ENCODE measurements at regions of chr12 and their contacts with region 1.

Region 1: DNA sequence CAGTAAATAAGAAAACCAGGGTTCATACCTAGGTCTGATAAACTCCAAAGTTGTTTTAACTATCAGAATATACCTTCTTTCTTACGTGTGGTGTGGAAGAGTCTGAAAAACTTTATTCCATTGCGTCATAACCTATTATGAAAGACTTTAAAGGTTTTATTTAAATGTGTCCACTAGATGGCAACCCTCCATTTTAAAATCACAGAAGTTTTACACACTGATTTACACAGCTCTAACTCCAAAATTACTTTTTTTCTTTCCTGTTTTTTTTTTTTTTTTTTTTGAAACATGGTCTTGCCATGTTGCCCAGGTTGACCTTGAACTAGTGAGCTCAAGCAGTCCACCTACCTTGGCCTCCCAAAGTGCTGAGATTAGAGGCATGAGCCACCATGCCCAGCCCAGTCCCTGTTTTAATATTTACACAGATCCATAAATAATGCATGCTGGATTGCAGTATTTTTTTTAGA is 17.3 kb upstream of the TMPRSS12 start:
- DNase-seq: peak in 1 of 2 donors; percentile 14
- H3K4me3 ChIP-seq: no peak overlapping the region
- H3K27ac ChIP-seq: peak overlapping the region; percentile 5 to 54 (median 39)
- H3K4me1 ChIP-seq: peaks cover 0 to 5% of the 10 kb centered on the region in 2 donors
- H3K27me3 ChIP-seq: no peaks in the 10 kb centered on the region
- CTCF ChIP-seq: peak in 5 of 6 experiments; percentile 28 to 87 (median 47)
- POLR2A ChIP-seq: no peak

Region 2: GRCh38 chr12:50763639-50764285 is 61.6 kb before region 1 on chr12 and contains the start of gene ATF1:
- intact Hi-C with region 1: no loop called
- DNase-seq: peak; percentile 89 to 90
- H3K4me3 ChIP-seq: peak within 1 kb of the TSS; percentile 59 to 99 (median 98)
- H3K27ac ChIP-seq: peak within 1 kb of the TSS; percentile 97 to 99 (median 99)
- H3K4me1 ChIP-seq: peaks cover 27% of the 10 kb centered on the region in 2 donors
- H3K27me3 ChIP-seq: no peaks in the 10 kb centered on the region
- CTCF ChIP-seq: no peak
- POLR2A ChIP-seq: peak in 1 of 2 donors; percentile 92
- total RNA-seq, gene ATF1: 19.4 to 37.0 (median 25.5) TPM

Region 3: GRCh38 chr12:50986966-50987737 is 161.7 kb after region 1 on chr12:
- intact Hi-C with region 1: loop called (anchors 5 kb)
- DNase-seq: peak; percentile 48 to 50
- H3K4me3 ChIP-seq: no peak overlapping the region
- H3K27ac ChIP-seq: peak overlapping the region in 2 of 3 donors; percentile 37 to 68
- H3K4me1 ChIP-seq: peaks cover 15 to 30% of the 10 kb centered on the region in 2 donors
- H3K27me3 ChIP-seq: no peaks in the 10 kb centered on the region
- CTCF ChIP-seq: peak; percentile 25 to 65 (median 50)
- POLR2A ChIP-seq: no peak

Region 4: DNA sequence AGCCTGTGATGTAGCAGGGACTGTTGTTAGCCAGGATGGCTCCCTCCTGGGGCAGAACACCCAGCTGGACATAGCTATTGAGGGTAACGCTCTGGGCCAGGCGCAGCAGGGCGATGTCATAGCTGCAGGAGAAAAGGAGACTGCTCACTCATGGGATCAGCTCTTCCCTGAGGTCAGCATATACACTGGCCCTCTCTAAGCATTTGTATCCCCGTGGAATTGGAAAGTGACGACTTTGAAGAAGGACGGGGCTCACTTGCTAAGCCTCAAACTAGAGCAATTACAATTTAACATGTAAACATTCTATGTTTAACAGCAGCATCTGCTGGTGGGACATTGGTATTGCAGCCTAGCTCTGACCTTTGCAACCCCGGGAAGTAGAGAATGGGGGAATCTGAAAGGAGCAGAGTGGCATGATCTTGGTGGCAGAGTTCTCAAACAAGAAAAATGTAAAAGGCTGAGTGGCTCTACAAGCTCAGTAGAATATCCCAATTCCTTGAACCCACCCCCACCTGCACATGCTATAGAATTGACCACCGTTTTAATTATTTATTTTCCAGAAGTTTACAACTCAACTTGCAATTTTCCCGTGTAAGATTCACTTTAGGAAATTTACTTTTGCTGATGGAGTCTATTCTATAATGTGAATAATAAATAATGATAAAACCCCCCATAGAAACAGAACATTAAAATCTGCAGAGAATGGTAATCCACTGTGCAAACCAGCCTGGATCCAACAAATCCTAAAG is 516.0 kb after region 1 on chr12:
- intact Hi-C with region 1: loop called (anchors 10 kb)
- DNase-seq: peak; percentile 64 to 67
- H3K4me3 ChIP-seq: no peak overlapping the region
- H3K27ac ChIP-seq: peak overlapping the region in 1 of 3 donors; percentile 27
- H3K4me1 ChIP-seq: peaks cover 0 to 2% of the 10 kb centered on the region in 2 donors
- H3K27me3 ChIP-seq: no peaks in the 10 kb centered on the region
- CTCF ChIP-seq: peak; percentile 89 to 98 (median 96)
- POLR2A ChIP-seq: no peak

Measured in thyroid gland (tissue), 4 donors.